B cell (primary cell): ENCODE measurements at regions of chr17 and their contacts with region 1.

Region 1: DNA sequence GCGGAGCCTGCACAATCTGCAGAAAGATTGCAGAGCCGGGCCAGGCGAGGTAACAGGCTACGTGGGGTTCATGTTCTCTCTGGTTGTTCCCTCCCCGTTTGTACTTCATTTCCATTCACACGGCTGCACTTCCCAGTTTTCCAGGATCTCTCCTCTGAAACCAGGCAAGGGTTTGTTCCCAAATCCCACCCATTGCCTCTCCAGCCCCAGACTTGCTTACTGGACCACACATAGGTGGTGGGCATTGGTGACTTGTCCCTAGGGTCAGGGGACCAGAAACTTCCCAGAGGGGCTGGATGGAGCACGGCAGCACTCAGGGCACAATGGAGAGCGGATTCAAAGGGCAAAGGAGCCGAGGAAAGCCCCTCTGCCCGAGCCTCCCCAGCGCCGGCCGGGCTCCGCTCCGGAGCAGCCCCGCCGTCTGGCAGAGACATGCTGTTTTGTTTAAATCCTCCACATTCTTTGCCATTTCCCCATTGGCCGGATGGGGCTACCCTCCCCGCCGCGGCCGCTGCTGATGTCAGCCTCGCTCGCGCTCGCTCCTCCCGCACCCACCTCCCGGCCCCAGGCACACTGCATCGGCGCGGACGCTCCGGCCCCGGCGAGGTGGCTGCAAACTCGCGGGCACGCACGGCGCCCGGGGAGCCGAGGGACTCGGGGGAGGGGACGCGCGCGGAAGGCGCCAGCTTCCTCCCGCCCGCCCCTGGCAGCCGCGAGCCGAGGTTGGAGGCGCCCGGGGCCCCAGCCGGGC is at the start of gene PITPNC1:
- DNase-seq: peak; percentile 90
- ATAC-seq: peak; percentile 74
- H3K4me3 ChIP-seq: peak within 1 kb of the TSS; percentile 54 to 90 (median 86)
- H3K4me3 Mint-ChIP-seq: peak within 1 kb of the TSS; percentile 94
- H3K27ac ChIP-seq: peak within 1 kb of the TSS; percentile 47
- H3K27ac Mint-ChIP-seq: peak within 1 kb of the TSS; percentile 92
- H3K4me1 ChIP-seq: peaks cover 25 to 30% of the 10 kb centered on the region in 2 donors
- H3K4me1 Mint-ChIP-seq: peaks cover 26% of the 10 kb centered on the region
- H3K27me3 ChIP-seq: no peaks in the 10 kb centered on the region
- H3K27me3 Mint-ChIP-seq: no peaks in the 10 kb centered on the region
- CTCF ChIP-seq: no peak
- total RNA-seq, gene PITPNC1: 24.5 and 26.1 TPM in 2 replicates

Region 2: DNA sequence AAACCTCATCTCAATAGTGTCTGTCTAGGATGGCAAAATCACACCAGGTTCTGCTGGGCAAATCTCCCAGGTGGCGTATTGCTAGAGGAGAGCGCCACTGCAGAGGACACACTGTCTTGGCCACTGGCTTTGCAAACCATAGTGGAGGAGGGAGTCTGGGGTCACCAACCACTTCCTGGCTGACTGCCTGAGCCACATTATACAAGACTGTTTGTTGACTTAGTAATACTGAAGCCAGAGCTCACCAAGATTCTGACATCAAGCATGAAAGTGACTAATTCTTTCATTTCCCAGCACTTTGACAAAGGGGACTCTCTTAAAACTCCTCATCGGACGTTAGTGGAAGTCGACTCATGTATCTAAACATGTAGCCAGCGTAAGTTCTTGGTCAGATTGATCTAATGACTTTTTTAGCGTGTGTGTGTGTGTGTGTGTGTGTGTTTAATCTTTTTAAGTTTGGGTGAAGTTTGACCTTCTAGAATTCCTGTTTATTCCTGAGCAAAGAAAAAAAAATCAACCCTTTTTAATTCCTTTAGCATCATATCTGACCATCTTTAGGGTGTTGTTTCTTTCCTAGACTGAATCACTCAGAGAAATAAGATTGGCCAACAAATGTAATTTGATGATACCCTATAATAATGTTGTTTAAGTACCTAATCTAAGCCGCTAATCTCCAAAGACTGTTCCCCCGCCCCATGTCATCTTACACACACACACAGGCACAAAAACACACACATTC is 13.9 kb after region 1 on chr17:
- CTCF ChIA-PET with region 1: interaction called, 18 read pairs
- POLR2A ChIA-PET with region 1: no interaction called
- intact Hi-C with region 1: no loop called
- DNase-seq: no peak
- ATAC-seq: peak; percentile 41
- H3K4me3 ChIP-seq: no peak overlapping the region
- H3K4me3 Mint-ChIP-seq: peak overlapping the region; percentile 61
- H3K27ac ChIP-seq: no peak overlapping the region
- H3K27ac Mint-ChIP-seq: peak overlapping the region; percentile 72
- H3K4me1 ChIP-seq: no peaks in the 10 kb centered on the region
- H3K4me1 Mint-ChIP-seq: peaks cover 20% of the 10 kb centered on the region
- H3K27me3 ChIP-seq: no peaks in the 10 kb centered on the region
- H3K27me3 Mint-ChIP-seq: no peaks in the 10 kb centered on the region
- CTCF ChIP-seq: no peak

Region 3: GRCh38 chr17:67602956-67603355 is 226.0 kb after region 1 on chr17:
- CTCF ChIA-PET with region 1: interaction called, 24 read pairs
- POLR2A ChIA-PET with region 1: no interaction called
- intact Hi-C with region 1: loop called (anchors 1 kb)
- DNase-seq: peak; percentile 30
- ATAC-seq: peak; percentile 31
- H3K4me3 ChIP-seq: no peak overlapping the region
- H3K4me3 Mint-ChIP-seq: no peak overlapping the region
- H3K27ac ChIP-seq: no peak overlapping the region
- H3K27ac Mint-ChIP-seq: no peak overlapping the region
- H3K4me1 ChIP-seq: no peaks in the 10 kb centered on the region
- H3K4me1 Mint-ChIP-seq: peaks cover 2% of the 10 kb centered on the region
- H3K27me3 ChIP-seq: no peaks in the 10 kb centered on the region
- H3K27me3 Mint-ChIP-seq: no peaks in the 10 kb centered on the region
- CTCF ChIP-seq: peak; percentile 38

Region 4: GRCh38 chr17:67717624-67718329 is 340.9 kb after region 1 on chr17 and contains the start of gene NOL11:
- CTCF ChIA-PET with region 1: interaction called, 11 read pairs
- POLR2A ChIA-PET with region 1: interaction called, 3 read pairs
- intact Hi-C with region 1: loop called (anchors 10 kb)
- DNase-seq: peak; percentile 100
- ATAC-seq: peak; percentile 95
- H3K4me3 ChIP-seq: peak within 1 kb of the TSS; percentile 70 to 97 (median 91)
- H3K4me3 Mint-ChIP-seq: peak within 1 kb of the TSS; percentile 98
- H3K27ac ChIP-seq: peak within 1 kb of the TSS; percentile 88 to 97
- H3K27ac Mint-ChIP-seq: peak within 1 kb of the TSS; percentile 97
- H3K4me1 ChIP-seq: peaks cover 18 to 21% of the 10 kb centered on the region in 2 donors
- H3K4me1 Mint-ChIP-seq: peaks cover 20% of the 10 kb centered on the region
- H3K27me3 ChIP-seq: no peaks in the 10 kb centered on the region
- H3K27me3 Mint-ChIP-seq: no peaks in the 10 kb centered on the region
- CTCF ChIP-seq: peak; percentile 86
- total RNA-seq, gene NOL11: 59.1 and 59.9 TPM in 2 replicates

Region 5: GRCh38 chr17:69327060-69327831 is 1950.3 kb after region 1 on chr17 and contains the start of gene ABCA5:
- CTCF ChIA-PET with region 1: no interaction called
- POLR2A ChIA-PET with region 1: no interaction called
- intact Hi-C with region 1: loop called (anchors 5 kb)
- DNase-seq: peak; percentile 95
- ATAC-seq: peak; percentile 93
- H3K4me3 ChIP-seq: peak within 1 kb of the TSS; percentile 39 to 88 (median 80)
- H3K4me3 Mint-ChIP-seq: peak within 1 kb of the TSS; percentile 96
- H3K27ac ChIP-seq: peak within 1 kb of the TSS; percentile 86 to 90
- H3K27ac Mint-ChIP-seq: peak within 1 kb of the TSS; percentile 98
- H3K4me1 ChIP-seq: peaks cover 7 to 12% of the 10 kb centered on the region in 2 donors
- H3K4me1 Mint-ChIP-seq: peaks cover 17% of the 10 kb centered on the region
- H3K27me3 ChIP-seq: peaks cover 0 to 11% (median 1%) of the 10 kb centered on the region in 4 experiments
- H3K27me3 Mint-ChIP-seq: peaks cover 12% of the 10 kb centered on the region
- CTCF ChIP-seq: no peak
- total RNA-seq, gene ABCA5: 37.2 and 37.8 TPM in 2 replicates